IMR-90 (cell line): ENCODE measurements at regions of chr4 and their contacts with region 1.

Region 1: GRCh38 chr4:77172336-77172735 is 15.3 kb downstream of the CCNG2 start:
- DNase-seq: peak; percentile 95
- ATAC-seq: peak; percentile 90
- H3K4me3 ChIP-seq: no peak overlapping the region
- H3K27ac ChIP-seq: no peak overlapping the region
- H3K4me1 ChIP-seq: peaks cover 10% of the 10 kb centered on the region
- H3K27me3 ChIP-seq: peaks cover 33% of the 10 kb centered on the region
- CTCF ChIP-seq: no peak
- POLR2A ChIP-seq: no peak
- RAD21 ChIP-seq: no peak

Region 2: GRCh38 chr4:76208005-76208765 is 964.2 kb before region 1 on chr4:
- CTCF ChIA-PET with region 1: no interaction called
- POLR2A ChIA-PET with region 1: no interaction called
- dilution Hi-C with region 1: no loop called
- in situ Hi-C with region 1: loop called (anchors 5 kb)
- intact Hi-C with region 1: no loop called
- DNase-seq: peak; percentile 94
- ATAC-seq: peak; percentile 88
- H3K4me3 ChIP-seq: peak overlapping the region; percentile 29; the same call in 1 of the 2 replicates
- H3K27ac ChIP-seq: peak overlapping the region; percentile 65
- H3K4me1 ChIP-seq: peaks cover 18% of the 10 kb centered on the region
- H3K27me3 ChIP-seq: no peaks in the 10 kb centered on the region
- CTCF ChIP-seq: no peak
- POLR2A ChIP-seq: no peak; the same call in 1 of the 2 replicates
- RAD21 ChIP-seq: no peak